Heart right ventricle (tissue), 16 donors: ENCODE measurements at regions of chr20 and their contacts with region 1.

Region 1: GRCh38 chr20:45765980-45766379 is 25.7 kb downstream of the WFDC3 start:
- DNase-seq: no peak
- ATAC-seq: no peak
- H3K4me3 ChIP-seq: no peak overlapping the region
- H3K27ac ChIP-seq: no peak overlapping the region
- H3K4me1 ChIP-seq: peaks cover 0 to 4% (median 3%) of the 10 kb centered on the region in 9 donors
- H3K27me3 ChIP-seq: no peaks in the 10 kb centered on the region
- CTCF ChIP-seq: no peak

Region 2: DNA sequence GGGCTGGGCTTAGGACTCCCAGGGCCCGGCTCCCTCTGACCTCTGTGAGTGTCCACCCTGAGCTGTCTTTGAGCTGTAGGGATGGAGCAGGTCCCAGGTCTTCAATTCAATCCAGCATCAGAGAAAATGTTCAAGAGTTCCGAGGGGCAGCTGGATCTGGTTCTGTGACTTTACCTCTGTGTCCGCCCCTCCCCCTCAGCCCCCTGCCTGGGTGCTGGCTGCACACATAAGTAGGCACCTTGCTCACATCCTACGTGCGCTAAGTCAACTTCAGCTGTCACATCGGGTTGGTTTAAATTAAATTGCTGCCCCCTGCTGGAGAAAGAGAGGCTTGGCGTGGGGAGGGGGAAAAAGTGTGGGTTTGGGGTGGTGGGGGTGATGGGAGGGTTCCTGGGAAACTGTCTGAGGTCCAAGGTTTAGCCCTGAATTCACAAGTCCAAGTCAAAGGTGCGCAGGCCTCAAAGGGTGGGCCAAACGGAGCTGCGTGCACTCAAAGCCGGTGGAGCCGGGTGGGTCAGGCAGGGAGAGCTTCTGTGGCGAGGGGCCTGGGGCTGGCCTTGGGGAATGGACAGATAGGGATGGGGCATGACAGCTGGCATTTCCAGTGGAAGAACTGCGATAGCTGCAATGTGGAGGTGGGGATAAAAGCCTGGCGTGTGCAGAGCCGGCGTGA is 654.0 kb before region 1 on chr20:
- intact Hi-C with region 1: no loop called
- DNase-seq: no peak
- ATAC-seq: no peak
- H3K4me3 ChIP-seq: no peak overlapping the region
- H3K27ac ChIP-seq: no peak overlapping the region
- H3K4me1 ChIP-seq: no peaks in the 10 kb centered on the region
- H3K27me3 ChIP-seq: peaks cover 0 to 56% (median 20%) of the 10 kb centered on the region in 7 donors
- CTCF ChIP-seq: peak; percentile 10 to 50 (median 45)

Region 3: GRCh38 chr20:45545754-45546453 is 220.1 kb before region 1 on chr20:
- intact Hi-C with region 1: loop called in 3 of 10 experiments (anchors 5 to 10 kb)
- DNase-seq: no peak
- ATAC-seq: no peak
- H3K4me3 ChIP-seq: no peak overlapping the region
- H3K27ac ChIP-seq: no peak overlapping the region
- H3K4me1 ChIP-seq: no peaks in the 10 kb centered on the region
- H3K27me3 ChIP-seq: peaks cover 0 to 47% (median 23%) of the 10 kb centered on the region in 7 donors
- CTCF ChIP-seq: peak in 6 of 9 donors; percentile 24 to 48 (median 32)

Region 4: GRCh38 chr20:45704969-45705637 is 60.9 kb before region 1 on chr20 and contains the start of gene WFDC10B:
- intact Hi-C with region 1: no loop called
- DNase-seq: no peak
- ATAC-seq: no peak
- H3K4me3 ChIP-seq: no peak within 1 kb of the TSS
- H3K27ac ChIP-seq: no peak within 1 kb of the TSS
- H3K4me1 ChIP-seq: no peaks in the 10 kb centered on the region
- H3K27me3 ChIP-seq: peaks cover 0 to 13% (median 0%) of the 10 kb centered on the region in 7 donors
- CTCF ChIP-seq: no peak
- total RNA-seq, gene WFDC10B: not detected

Region 5: GRCh38 chr20:46031701-46032254 is 265.8 kb after region 1 on chr20:
- intact Hi-C with region 1: no loop called
- DNase-seq: no peak
- ATAC-seq: peak in 6 of 8 donors; percentile 29 to 67 (median 38)
- H3K4me3 ChIP-seq: peak overlapping the region in 6 of 10 donors; percentile 14 to 27 (median 19)
- H3K27ac ChIP-seq: no peak overlapping the region
- H3K4me1 ChIP-seq: peaks cover 0 to 11% (median 9%) of the 10 kb centered on the region in 9 donors
- H3K27me3 ChIP-seq: peaks cover 34 to 100% (median 90%) of the 10 kb centered on the region in 7 donors
- CTCF ChIP-seq: no peak